Activated naive CD4-positive, alpha-beta T cell treated with anti-CD3 and anti-CD28 coated beads for 36 hours (primary cell): ENCODE measurements at regions of chr5 and their contacts with region 1.

Region 1: GRCh38 chr5:101045689-101046088 is 142.6 kb upstream of the ST8SIA4 start:
- DNase-seq: no peak
- H3K4me3 Mint-ChIP-seq: no peak overlapping the region
- H3K27ac Mint-ChIP-seq: no peak overlapping the region
- H3K4me1 Mint-ChIP-seq: peaks cover 6% of the 10 kb centered on the region
- H3K27me3 Mint-ChIP-seq: no peaks in the 10 kb centered on the region

Region 2: GRCh38 chr5:99104538-99105132 is 1941.1 kb before region 1 on chr5:
- CTCF ChIA-PET with region 1: no interaction called
- intact Hi-C with region 1: loop called (anchors 10 kb)
- DNase-seq: no peak
- H3K4me3 Mint-ChIP-seq: no peak overlapping the region
- H3K27ac Mint-ChIP-seq: no peak overlapping the region
- H3K4me1 Mint-ChIP-seq: no peaks in the 10 kb centered on the region
- H3K27me3 Mint-ChIP-seq: no peaks in the 10 kb centered on the region

Region 3: DNA sequence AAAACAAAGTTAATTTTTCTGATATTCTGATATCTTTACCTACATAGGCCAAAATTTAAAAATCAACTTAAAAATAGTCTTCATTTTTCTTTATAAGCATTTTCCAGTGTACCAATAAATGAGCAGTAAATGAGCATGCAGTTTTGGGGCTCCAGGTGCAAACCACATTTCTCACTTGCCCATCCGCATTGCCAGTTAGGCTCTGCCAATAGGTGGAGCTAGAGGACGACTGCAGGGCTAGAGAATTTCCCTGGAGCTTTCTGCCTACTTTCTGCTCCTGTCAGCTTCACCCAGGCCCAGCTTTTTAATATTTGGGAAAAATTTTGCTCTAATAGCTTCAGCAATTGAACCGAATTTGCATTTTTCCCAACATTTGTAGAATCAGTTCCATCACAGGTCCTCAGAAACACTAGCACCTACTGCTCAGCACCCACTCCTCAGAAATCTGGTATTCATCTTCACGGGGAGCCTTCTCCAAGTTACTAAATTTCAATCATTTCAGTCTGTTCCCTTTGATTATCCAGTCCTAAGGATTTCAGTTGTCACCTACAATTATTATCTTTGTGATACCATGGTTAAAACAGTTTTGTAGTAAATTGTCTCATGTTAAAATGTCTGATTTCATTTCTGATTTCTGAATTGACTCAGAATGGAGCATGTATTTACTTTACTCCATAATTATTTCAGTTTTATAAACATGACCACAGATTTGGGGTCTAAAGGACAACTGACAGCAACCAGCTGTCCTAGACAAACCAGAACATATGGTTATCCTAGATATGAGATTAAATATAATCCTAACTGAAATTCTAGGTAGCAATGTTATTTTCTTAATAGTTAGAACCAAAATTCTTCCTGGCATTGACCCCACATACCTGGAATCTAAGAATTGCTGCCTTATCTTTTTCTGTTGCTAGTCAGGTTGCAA is 615.2 kb before region 1 on chr5:
- CTCF ChIA-PET with region 1: no interaction called
- intact Hi-C with region 1: loop called (anchors 2 kb)
- DNase-seq: peak; percentile 65
- H3K4me3 Mint-ChIP-seq: no peak overlapping the region
- H3K27ac Mint-ChIP-seq: no peak overlapping the region
- H3K4me1 Mint-ChIP-seq: no peaks in the 10 kb centered on the region
- H3K27me3 Mint-ChIP-seq: no peaks in the 10 kb centered on the region

Region 4: GRCh38 chr5:100479079-100479688 is 566.5 kb before region 1 on chr5:
- CTCF ChIA-PET with region 1: no interaction called
- intact Hi-C with region 1: loop called (anchors 5 kb)
- DNase-seq: peak; percentile 4
- H3K4me3 Mint-ChIP-seq: no peak overlapping the region
- H3K27ac Mint-ChIP-seq: no peak overlapping the region
- H3K4me1 Mint-ChIP-seq: no peaks in the 10 kb centered on the region
- H3K27me3 Mint-ChIP-seq: no peaks in the 10 kb centered on the region

Region 5: GRCh38 chr5:100623719-100624118 is 422.0 kb before region 1 on chr5:
- CTCF ChIA-PET with region 1: no interaction called
- intact Hi-C with region 1: loop called (anchors 1 kb)
- DNase-seq: no peak
- H3K4me3 Mint-ChIP-seq: no peak overlapping the region
- H3K27ac Mint-ChIP-seq: no peak overlapping the region
- H3K4me1 Mint-ChIP-seq: no peaks in the 10 kb centered on the region
- H3K27me3 Mint-ChIP-seq: no peaks in the 10 kb centered on the region

Region 6: DNA sequence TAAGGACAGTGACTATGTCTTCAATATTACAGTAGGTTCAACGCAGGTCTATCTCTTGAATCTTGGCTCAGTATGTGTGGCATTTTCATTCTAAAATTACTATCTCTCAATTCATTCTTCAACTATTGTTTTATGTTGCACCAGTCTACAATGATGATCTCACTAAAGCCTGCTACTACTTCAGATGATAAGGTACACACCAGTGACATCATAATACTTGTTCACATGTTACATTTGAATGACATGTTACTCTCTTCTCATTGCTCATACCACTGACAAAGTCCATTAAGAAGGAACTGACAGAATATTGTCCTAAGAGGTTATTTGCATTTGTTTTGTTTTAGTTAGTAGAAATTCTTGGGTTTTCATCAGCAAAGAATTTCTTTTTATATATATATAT is 22.6 kb after region 1 on chr5:
- CTCF ChIA-PET with region 1: no interaction called
- intact Hi-C with region 1: no loop called
- DNase-seq: no peak
- H3K4me3 Mint-ChIP-seq: no peak overlapping the region
- H3K27ac Mint-ChIP-seq: no peak overlapping the region
- H3K4me1 Mint-ChIP-seq: no peaks in the 10 kb centered on the region
- H3K27me3 Mint-ChIP-seq: no peaks in the 10 kb centered on the region

Region 7: GRCh38 chr5:102223542-102224477 is 1178.1 kb after region 1 on chr5:
- CTCF ChIA-PET with region 1: no interaction called
- intact Hi-C with region 1: loop called (anchors 5 kb)
- DNase-seq: no peak
- H3K4me3 Mint-ChIP-seq: no peak overlapping the region
- H3K27ac Mint-ChIP-seq: no peak overlapping the region
- H3K4me1 Mint-ChIP-seq: no peaks in the 10 kb centered on the region
- H3K27me3 Mint-ChIP-seq: peaks cover 4% of the 10 kb centered on the region